Heart left ventricle (tissue), 16 donors: ENCODE measurements at regions of chr9 and their contacts with region 1.

Region 1: GRCh38 chr9:112104901-112105300 is 70.2 kb downstream of the SUSD1 start:
- DNase-seq: no peak
- ATAC-seq: no peak
- H3K4me3 ChIP-seq: no peak overlapping the region
- H3K27ac ChIP-seq: peak overlapping the region in 1 of 12 donors; percentile 82
- H3K4me1 ChIP-seq: peaks cover 0 to 46% (median 0%) of the 10 kb centered on the region in 12 donors
- H3K27me3 ChIP-seq: no peaks in the 10 kb centered on the region
- CTCF ChIP-seq: no peak
- POLR2A ChIP-seq: no peak

Region 2: GRCh38 chr9:112166172-112167140 is 61.6 kb after region 1 on chr9:
- intact Hi-C with region 1: loop called in 1 of 10 experiments (anchors 10 kb)
- DNase-seq: peak in 2 of 5 donors; percentile 8 to 42
- ATAC-seq: peak; percentile 50 to 88 (median 82)
- H3K4me3 ChIP-seq: no peak overlapping the region
- H3K27ac ChIP-seq: peak overlapping the region in 8 of 12 donors; percentile 14 to 53 (median 30)
- H3K4me1 ChIP-seq: peaks cover 0 to 10% (median 0%) of the 10 kb centered on the region in 12 donors
- H3K27me3 ChIP-seq: no peaks in the 10 kb centered on the region
- CTCF ChIP-seq: peak in 4 of 12 donors; percentile 13 to 39 (median 22)
- POLR2A ChIP-seq: no peak

Region 3: GRCh38 chr9:112184946-112185345 is 80.0 kb after region 1 on chr9:
- intact Hi-C with region 1: no loop called
- DNase-seq: no peak
- ATAC-seq: no peak
- H3K4me3 ChIP-seq: no peak overlapping the region
- H3K27ac ChIP-seq: no peak overlapping the region
- H3K4me1 ChIP-seq: peaks cover 0 to 15% (median 7%) of the 10 kb centered on the region in 12 donors
- H3K27me3 ChIP-seq: no peaks in the 10 kb centered on the region
- CTCF ChIP-seq: no peak
- POLR2A ChIP-seq: no peak